Stomach (tissue), 19 donors: ENCODE measurements at regions of chr12 and their contacts with region 1.

Region 1: GRCh38 chr12:16165506-16165905 is 112.0 kb downstream of the SLC15A5 start:
- DNase-seq: peak; percentile 36 to 80
- H3K4me3 ChIP-seq: no peak overlapping the region
- H3K27ac ChIP-seq: no peak overlapping the region
- H3K4me1 ChIP-seq: peaks cover 0 to 3% (median 0%) of the 10 kb centered on the region in 4 donors
- H3K27me3 ChIP-seq: no peaks in the 10 kb centered on the region
- CTCF ChIP-seq: peak in 3 of 7 experiments; percentile 27 to 54 (median 38)
- EP300 ChIP-seq: no peak
- POLR2A ChIP-seq: no peak

Region 2: GRCh38 chr12:16323010-16323409 is 157.5 kb after region 1 on chr12:
- intact Hi-C with region 1: no loop called
- DNase-seq: no peak
- H3K4me3 ChIP-seq: no peak overlapping the region
- H3K27ac ChIP-seq: no peak overlapping the region
- H3K4me1 ChIP-seq: peaks cover 0 to 13% (median 5%) of the 10 kb centered on the region in 4 donors
- H3K27me3 ChIP-seq: no peaks in the 10 kb centered on the region
- CTCF ChIP-seq: no peak
- EP300 ChIP-seq: no peak
- POLR2A ChIP-seq: no peak

Region 3: DNA sequence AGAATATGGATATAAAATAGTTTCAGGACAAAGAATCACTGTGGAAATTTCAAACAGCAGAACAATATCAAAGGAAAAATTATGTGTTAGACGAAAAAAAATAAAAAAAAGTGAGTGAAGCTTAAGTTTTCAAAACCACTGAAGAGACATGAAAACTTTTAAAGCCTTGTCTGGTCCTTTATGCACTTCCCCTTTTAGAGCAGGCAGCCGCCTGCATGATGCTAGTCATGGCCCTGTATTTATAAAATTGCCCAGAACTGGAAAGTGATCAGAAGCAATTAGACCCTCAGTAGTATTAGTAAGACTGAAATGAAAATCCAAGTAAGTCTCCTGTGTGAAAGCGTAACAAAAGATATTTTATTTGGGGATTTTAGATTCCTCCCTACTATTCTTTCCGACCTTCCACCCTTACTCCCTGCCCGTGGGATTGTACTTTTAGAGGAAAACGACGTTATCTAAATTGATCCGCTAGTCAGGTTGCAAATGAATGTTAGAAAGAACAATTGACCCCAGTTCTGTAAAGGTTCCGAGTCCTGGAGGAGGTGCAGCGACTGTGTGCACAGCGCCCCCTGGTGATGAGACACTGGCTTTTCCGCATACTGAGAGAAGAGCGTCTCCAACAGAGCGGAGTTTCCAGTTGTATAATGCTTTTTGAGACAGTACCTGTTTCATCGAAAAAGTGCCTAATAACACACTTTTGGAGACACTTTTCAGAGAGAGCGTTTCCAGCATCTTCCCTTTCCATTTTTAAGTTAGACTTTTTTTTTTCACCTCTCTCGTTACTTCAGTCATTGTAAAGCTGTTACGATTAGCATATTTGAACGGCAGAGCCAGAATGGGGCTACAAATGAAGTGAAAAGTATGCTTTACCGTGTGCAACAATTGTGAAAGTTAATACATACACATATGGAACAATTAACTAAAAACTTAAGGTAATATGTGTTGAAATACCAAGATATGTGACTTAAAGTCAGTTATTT is 194.3 kb after region 1 on chr12:
- intact Hi-C with region 1: loop called (anchors 10 kb)
- DNase-seq: peak; percentile 68 to 71
- H3K4me3 ChIP-seq: no peak overlapping the region
- H3K27ac ChIP-seq: no peak overlapping the region
- H3K4me1 ChIP-seq: no peaks in the 10 kb centered on the region
- H3K27me3 ChIP-seq: no peaks in the 10 kb centered on the region
- CTCF ChIP-seq: peak in 5 of 7 experiments; percentile 42 to 66 (median 58)
- EP300 ChIP-seq: no peak
- POLR2A ChIP-seq: no peak